Gastrocnemius medialis (tissue), 4 donors: ENCODE measurements at regions of chr1 and their contacts with region 1.

Region 1: DNA sequence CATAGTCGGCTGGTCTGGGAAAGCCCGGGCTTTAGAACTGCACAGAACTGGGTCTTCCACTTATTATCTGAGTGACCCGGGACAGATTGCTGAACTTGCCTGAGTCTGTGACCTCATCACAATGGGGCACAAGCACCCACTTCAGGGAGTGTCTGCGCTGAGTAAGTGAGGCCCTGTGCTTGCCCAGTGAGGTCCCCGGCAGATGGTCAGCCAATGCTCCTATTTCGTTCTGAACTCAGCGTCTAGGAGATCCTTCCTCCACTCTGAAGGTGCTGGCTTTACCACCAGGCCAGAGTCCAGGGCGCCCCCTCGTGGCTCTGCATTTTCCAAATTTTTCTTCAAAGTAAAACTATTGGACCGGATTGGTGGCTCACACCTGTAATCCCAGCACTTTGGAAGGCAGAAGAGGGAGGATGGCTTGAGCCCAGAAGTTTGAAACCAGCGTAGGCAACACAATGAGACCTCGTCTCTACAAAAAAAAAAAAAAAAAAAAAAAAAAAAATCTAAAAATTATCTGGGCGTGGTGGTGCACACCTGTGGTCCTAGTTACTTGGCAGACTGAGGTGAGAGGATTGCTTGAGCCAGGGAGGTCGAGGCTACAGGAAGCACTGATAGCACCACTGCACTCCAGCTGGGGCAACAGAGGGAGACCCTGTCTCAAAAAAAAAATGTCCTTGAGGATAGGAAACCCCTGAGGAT is 61.7 kb downstream of the FCRL5 start:
- DNase-seq: no peak
- ATAC-seq: no peak
- H3K4me3 ChIP-seq: no peak overlapping the region
- H3K27ac ChIP-seq: no peak overlapping the region
- H3K4me1 ChIP-seq: no peaks in the 10 kb centered on the region
- H3K27me3 ChIP-seq: no peaks in the 10 kb centered on the region
- CTCF ChIP-seq: peak in 1 of 5 experiments; percentile 27
- POLR2A ChIP-seq: no peak

Region 2: GRCh38 chr1:157163273-157164127 is 327.1 kb before region 1 on chr1:
- in situ Hi-C with region 1: no loop called
- intact Hi-C with region 1: loop called (anchors 10 kb)
- DNase-seq: peak in 1 of 2 donors; percentile 41
- ATAC-seq: peak; percentile 36 to 75
- H3K4me3 ChIP-seq: peak overlapping the region in 1 of 4 donors; percentile 28
- H3K27ac ChIP-seq: no peak overlapping the region
- H3K4me1 ChIP-seq: no peaks in the 10 kb centered on the region
- H3K27me3 ChIP-seq: no peaks in the 10 kb centered on the region
- CTCF ChIP-seq: peak; percentile 40 to 90 (median 62)
- POLR2A ChIP-seq: no peak

Region 3: GRCh38 chr1:157193702-157194391 is 296.8 kb before region 1 on chr1:
- in situ Hi-C with region 1: loop called in 2 of 4 experiments (anchors 25 kb)
- intact Hi-C with region 1: loop called (anchors 10 kb)
- DNase-seq: no peak
- ATAC-seq: no peak
- H3K4me3 ChIP-seq: no peak overlapping the region
- H3K27ac ChIP-seq: no peak overlapping the region
- H3K4me1 ChIP-seq: no peaks in the 10 kb centered on the region
- H3K27me3 ChIP-seq: peaks cover 18 to 22% (median 20%) of the 10 kb centered on the region in 3 donors
- CTCF ChIP-seq: peak in 1 of 5 experiments; percentile 36
- POLR2A ChIP-seq: no peak

Region 4: DNA sequence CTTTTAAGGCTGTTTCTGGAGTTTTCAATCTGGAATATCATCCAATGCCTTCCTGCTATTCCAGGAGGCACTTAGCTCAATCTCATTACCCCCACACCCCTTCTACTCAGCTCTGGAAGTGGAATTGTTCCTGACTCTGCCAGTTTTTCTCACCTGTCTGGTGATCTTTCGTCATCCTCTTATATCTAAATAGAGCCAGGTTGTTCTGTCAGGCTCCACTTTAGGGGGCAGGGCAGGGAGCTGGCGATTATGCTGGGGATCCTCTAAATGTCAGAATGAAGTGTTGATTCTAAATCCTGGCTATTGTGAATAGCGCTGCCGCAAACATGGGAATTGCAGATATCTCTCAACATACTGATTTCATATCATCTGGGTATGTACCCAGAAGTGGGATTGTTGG is 288.8 kb before region 1 on chr1:
- in situ Hi-C with region 1: loop called (anchors 25 kb)
- intact Hi-C with region 1: loop called (anchors 10 kb)
- DNase-seq: no peak
- ATAC-seq: no peak
- H3K4me3 ChIP-seq: no peak overlapping the region
- H3K27ac ChIP-seq: no peak overlapping the region
- H3K4me1 ChIP-seq: no peaks in the 10 kb centered on the region
- H3K27me3 ChIP-seq: peaks cover 0 to 5% (median under 1%) of the 10 kb centered on the region in 3 donors
- CTCF ChIP-seq: no peak
- POLR2A ChIP-seq: no peak

Region 5: DNA sequence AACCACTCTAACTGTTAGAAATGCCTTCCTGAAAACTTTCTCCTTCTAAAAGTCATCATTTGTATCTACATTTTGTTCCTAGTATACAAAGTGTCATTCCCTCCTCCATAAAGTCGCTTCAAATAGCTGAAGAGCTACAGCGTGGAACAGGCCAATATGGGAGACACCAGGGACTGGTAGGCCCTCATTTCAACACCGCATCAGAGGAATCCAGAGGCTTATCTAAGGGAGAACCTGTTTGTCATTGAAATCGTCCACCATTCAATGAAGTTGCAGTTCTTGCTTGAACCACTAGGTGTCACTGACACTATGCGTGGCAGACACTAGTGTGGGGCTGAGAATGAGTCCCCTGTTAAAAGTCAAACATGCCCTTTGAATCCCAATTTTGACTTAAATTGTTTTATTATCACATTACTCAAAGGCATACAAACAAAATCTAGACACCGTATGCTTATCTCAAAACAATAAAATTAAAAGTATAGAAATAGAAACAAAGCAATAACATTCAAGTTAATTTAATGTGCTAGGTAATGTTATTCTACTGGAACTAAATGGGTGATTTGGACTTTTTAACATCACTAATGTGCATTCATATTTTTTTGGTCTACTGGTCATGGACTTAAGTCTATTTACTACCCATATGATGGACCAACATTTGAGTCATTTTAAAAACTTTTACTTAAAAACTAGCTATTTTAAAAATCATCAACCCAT is 120.7 kb before region 1 on chr1:
- in situ Hi-C with region 1: loop called in 2 of 4 experiments (anchors 5 to 10 kb)
- intact Hi-C with region 1: no loop called
- DNase-seq: no peak
- ATAC-seq: peak in 1 of 2 donors; percentile 70
- H3K4me3 ChIP-seq: no peak overlapping the region
- H3K27ac ChIP-seq: no peak overlapping the region
- H3K4me1 ChIP-seq: no peaks in the 10 kb centered on the region
- H3K27me3 ChIP-seq: no peaks in the 10 kb centered on the region
- CTCF ChIP-seq: peak; percentile 52 to 90 (median 61)
- POLR2A ChIP-seq: no peak

Region 6: DNA sequence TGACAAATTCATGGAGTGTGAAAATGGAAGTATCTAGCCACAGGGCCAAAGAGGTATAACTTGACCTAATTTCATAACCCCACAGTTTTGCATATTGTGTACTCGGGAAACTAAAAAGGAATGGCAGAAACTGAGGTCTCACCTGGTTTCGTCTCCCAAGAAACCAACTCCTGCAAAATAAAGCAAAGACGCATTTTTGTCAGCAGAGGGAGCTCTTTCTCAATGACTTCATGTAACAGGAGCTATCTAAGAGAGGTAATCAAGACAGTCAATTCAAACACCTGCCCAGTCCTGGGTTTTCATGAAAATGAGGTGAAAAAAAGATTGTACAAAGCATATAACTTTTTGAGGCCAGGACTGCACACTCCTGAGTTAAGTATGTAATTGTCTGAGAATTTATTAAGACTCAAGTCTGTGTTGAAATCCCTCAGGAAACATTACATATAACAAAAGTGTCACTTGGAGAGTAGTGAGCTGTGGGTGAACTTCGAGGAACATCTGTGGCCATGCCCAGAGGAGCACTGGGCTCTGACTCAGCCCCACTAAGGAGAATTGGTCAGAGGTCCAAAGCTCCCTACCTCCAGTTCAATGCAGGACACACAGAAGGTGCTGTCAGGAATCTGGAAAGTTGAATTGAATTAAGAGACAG is 89.7 kb after region 1 on chr1:
- in situ Hi-C with region 1: no loop called
- intact Hi-C with region 1: no loop called
- DNase-seq: no peak
- ATAC-seq: no peak
- H3K4me3 ChIP-seq: no peak overlapping the region
- H3K27ac ChIP-seq: no peak overlapping the region
- H3K4me1 ChIP-seq: no peaks in the 10 kb centered on the region
- H3K27me3 ChIP-seq: no peaks in the 10 kb centered on the region
- CTCF ChIP-seq: peak in 4 of 5 experiments; percentile 14 to 46 (median 20)
- POLR2A ChIP-seq: no peak